AG04449 (cell line): ENCODE measurements at regions of chr22 and their contacts with region 1.

Region 1: GRCh38 chr22:27866132-27867086 is 52.6 kb downstream of the PITPNB start:
- DNase-seq: peak; percentile 93
- H3K4me3 ChIP-seq: no peak overlapping the region
- CTCF ChIP-seq: no peak

Region 2: GRCh38 chr22:27637604-27638003 is 228.8 kb before region 1 on chr22:
- CTCF ChIA-PET with region 1: no interaction called
- POLR2A ChIA-PET with region 1: no interaction called
- DNase-seq: no peak
- H3K4me3 ChIP-seq: no peak overlapping the region
- CTCF ChIP-seq: no peak

Region 3: GRCh38 chr22:27654546-27655445 is 211.6 kb before region 1 on chr22:
- CTCF ChIA-PET with region 1: no interaction called
- POLR2A ChIA-PET with region 1: no interaction called
- DNase-seq: no peak
- H3K4me3 ChIP-seq: no peak overlapping the region
- CTCF ChIP-seq: no peak

Region 4: DNA sequence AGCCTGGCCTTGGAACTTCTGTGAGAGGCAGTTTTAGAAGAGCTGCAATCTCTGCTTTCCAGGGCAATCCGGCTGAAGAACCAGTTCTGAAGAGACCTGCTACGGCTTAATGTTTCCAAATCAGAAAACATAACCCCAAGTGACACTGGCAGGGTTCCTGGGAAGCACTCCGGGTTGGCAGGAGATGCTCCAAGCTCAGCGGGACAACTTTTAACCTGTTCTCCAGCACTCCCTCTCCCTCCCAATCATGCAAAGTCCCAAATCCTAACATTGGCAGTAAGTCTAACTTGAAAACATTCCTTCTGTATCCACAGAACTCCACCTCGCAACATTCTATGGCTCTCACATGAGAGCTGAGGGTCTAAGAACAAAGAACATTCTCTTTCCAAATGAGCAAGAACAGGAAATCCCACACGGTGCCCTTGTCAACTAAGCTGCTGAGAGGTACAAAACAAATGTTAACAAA is 16.4 kb before region 1 on chr22:
- CTCF ChIA-PET with region 1: interaction called, 15 read pairs
- POLR2A ChIA-PET with region 1: no interaction called
- DNase-seq: no peak
- H3K4me3 ChIP-seq: no peak overlapping the region
- CTCF ChIP-seq: no peak

Region 5: GRCh38 chr22:27903805-27904473 is 37.5 kb after region 1 on chr22:
- CTCF ChIA-PET with region 1: no interaction called
- POLR2A ChIA-PET with region 1: no interaction called
- DNase-seq: no peak
- H3K4me3 ChIP-seq: no peak overlapping the region
- CTCF ChIP-seq: no peak